K562 (cell line): ENCODE measurements at regions of chr5 and their contacts with region 1.

Region 1: GRCh38 chr5:124649491-124650146 is 96.8 kb downstream of the ZNF608 start:
- DNase-seq: peak; percentile 23 to 69 (median 37)
- ATAC-seq: no peak
- H3K4me3 ChIP-seq: no peak overlapping the region
- H3K27ac ChIP-seq: peak overlapping the region; percentile 0; the same call in 1 of the 3 replicates
- H3K4me1 ChIP-seq: peaks cover 17 to 51% of the 10 kb centered on the region in 2 experiments
- H3K27me3 ChIP-seq: no peaks in the 10 kb centered on the region
- CTCF ChIP-seq: no peak
- EP300 ChIP-seq: no peak
- POLR2A ChIP-seq: no peak
- RAD21 ChIP-seq: no peak

Region 2: DNA sequence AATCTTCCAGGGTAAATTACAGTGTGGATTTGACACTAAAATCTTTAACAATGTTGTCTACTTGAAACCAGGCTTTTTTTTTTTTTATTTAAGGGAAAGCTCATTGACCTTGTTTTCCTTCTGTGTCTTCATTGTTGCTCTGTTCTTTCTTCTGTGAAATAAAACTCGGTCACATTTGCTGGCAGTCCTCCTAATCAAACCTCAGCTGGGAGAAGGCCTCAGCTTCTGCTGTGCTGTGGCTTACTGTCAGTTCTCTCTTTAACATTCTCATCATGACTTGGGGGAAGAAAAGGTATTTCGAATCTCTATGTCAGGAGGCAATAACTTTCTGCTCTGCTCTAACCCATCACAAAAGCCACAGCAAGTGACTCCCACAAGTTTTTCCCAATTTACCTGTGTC is 172.0 kb before region 1 on chr5:
- CTCF ChIA-PET with region 1: no interaction called
- POLR2A ChIA-PET with region 1: no interaction called
- in situ Hi-C with region 1: no loop called
- intact Hi-C with region 1: no loop called
- DNase-seq: no peak
- ATAC-seq: no peak
- H3K4me3 ChIP-seq: no peak overlapping the region
- H3K27ac ChIP-seq: no peak overlapping the region
- H3K4me1 ChIP-seq: no peaks in the 10 kb centered on the region
- H3K27me3 ChIP-seq: no peaks in the 10 kb centered on the region
- CTCF ChIP-seq: no peak
- EP300 ChIP-seq: no peak
- POLR2A ChIP-seq: no peak
- RAD21 ChIP-seq: no peak

Region 3: GRCh38 chr5:124725040-124725434 is 75.4 kb after region 1 on chr5:
- CTCF ChIA-PET with region 1: no interaction called
- POLR2A ChIA-PET with region 1: interaction called, 3 read pairs
- in situ Hi-C with region 1: no loop called
- intact Hi-C with region 1: loop called (anchors 2 kb)
- DNase-seq: peak; percentile 49 to 75 (median 59)
- ATAC-seq: peak; percentile 91
- H3K4me3 ChIP-seq: peak overlapping the region; percentile 44
- H3K27ac ChIP-seq: peak overlapping the region; percentile 61
- H3K4me1 ChIP-seq: peaks cover 0 to 6% of the 10 kb centered on the region in 2 experiments; a peak in 1 of 5 replicates
- H3K27me3 ChIP-seq: peaks cover 3 to 4% of the 10 kb centered on the region in 2 experiments; a peak in 2 of 5 replicates
- CTCF ChIP-seq: peak; percentile 22 to 60 (median 53); a peak in 4 of 6 replicates
- EP300 ChIP-seq: no peak
- POLR2A ChIP-seq: no peak
- RAD21 ChIP-seq: peak; percentile 24 to 28; a peak in 2 of 4 replicates

Region 4: DNA sequence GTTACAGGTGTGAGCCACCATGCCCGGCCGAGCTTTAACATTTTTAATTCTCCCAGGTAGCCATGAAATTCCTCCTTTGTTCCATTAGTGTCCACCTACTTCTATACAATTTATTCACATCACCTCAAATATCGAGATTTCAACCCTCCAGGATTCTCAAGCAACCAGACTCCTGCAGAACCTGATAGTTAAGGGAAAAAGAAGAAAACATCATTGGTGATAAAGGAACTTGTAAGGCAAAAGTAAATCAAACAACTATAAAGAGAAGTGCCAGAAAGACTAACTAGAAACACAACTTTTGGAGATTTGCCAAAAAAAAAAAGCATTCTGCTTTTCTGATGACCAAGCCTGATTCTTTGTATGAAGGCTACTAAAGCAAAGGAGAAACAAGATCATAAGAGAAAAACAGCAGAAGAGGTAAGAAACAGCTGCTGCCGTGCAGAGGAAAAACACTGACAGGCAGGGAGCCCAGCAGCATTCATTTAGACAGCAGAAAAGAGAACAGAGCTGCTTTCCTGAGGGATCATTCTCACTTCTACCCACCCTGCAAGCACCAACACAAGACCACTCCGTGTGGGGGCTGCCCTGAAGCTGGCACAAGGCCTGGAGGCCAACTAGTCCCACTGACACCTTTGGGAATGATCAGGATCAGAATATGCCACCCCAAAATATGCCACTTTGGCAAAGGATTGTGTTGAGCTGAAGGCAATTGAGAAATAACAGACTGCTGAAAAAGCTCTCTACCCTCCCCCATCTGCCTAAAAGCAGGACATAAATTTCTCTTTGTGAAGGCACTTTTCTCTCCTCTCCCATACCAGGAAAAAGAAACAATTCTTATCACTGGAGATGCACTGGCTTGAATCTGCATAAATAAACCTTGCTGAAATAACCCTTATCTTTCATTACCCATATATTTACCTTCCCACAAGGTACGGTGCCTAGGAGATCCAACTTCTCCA is 1870.3 kb after region 1 on chr5:
- CTCF ChIA-PET with region 1: no interaction called
- POLR2A ChIA-PET with region 1: no interaction called
- in situ Hi-C with region 1: no loop called
- intact Hi-C with region 1: loop called (anchors 10 kb)
- DNase-seq: peak in 2 of 4 experiments; percentile 46 to 75
- ATAC-seq: peak; percentile 78
- H3K4me3 ChIP-seq: peak overlapping the region; percentile 10; the same call in 1 of the 2 replicates
- H3K27ac ChIP-seq: peak overlapping the region; percentile 88
- H3K4me1 ChIP-seq: peaks cover 10 to 40% of the 10 kb centered on the region in 2 experiments
- H3K27me3 ChIP-seq: no peaks in the 10 kb centered on the region
- CTCF ChIP-seq: no peak
- EP300 ChIP-seq: peak; percentile 83
- POLR2A ChIP-seq: no peak
- RAD21 ChIP-seq: no peak